Activated CD4-positive, alpha-beta memory T cell treated with anti-CD3 and anti-CD28 coated beads for 36 hours (primary cell): ENCODE measurements at regions of chr14 and their contacts with region 1.

Region 1: DNA sequence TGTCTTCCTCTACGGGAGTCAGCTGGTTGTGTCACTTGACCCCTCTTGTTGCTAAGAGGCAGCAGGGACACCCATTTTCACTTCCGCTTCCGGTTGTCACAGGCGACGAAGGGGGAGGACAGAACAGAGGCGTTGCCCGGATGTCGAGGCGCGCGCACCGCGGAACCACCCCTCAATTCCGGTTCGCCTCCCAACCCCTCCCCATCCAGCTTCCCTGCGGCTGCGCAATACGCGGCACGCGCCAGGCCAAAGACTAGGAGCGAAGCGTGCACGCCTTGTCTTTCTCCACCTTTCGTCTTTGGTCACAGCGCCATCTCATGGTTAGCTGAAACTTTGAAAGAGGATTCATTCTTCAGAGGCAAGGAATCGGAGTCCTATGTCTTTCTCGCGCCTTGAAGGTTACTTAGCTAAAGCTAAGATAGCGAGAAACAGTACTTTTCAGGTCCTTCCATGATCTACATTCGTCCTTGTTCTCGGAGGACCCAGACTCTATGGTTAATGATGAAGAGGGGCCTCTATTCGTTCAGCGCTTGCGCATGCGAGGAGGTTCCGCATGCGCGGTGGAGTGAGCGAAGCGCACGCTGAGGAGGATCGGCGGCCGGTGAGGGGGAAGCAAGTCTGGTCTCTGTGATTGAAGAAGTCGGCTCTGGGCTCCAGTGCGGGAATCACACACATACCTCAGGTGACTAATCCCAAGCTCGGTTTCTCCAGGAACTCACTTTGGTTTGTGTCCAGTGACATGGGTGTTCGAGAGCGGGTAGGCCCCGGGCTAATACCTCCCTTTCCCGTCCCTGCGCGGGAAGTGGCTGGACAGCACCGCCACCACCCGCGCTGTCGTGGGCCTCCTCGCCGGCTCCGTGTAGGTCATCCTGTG is at the starts of genes ATP6V1D and EIF2S1:
- DNase-seq: peak; percentile 100
- H3K4me3 Mint-ChIP-seq: peak within 1 kb of the TSS; percentile 99
- H3K27ac Mint-ChIP-seq: peak within 1 kb of the TSS; percentile 98
- H3K4me1 Mint-ChIP-seq: peaks cover 62% of the 10 kb centered on the region
- H3K27me3 Mint-ChIP-seq: peaks cover 2% of the 10 kb centered on the region
- total RNA-seq, gene ATP6V1D: 28.3 to 31.7 TPM
- total RNA-seq, gene EIF2S1: 238 to 240 TPM

Region 2: GRCh38 chr14:67187210-67187609 is 172.8 kb before region 1 on chr14:
- CTCF ChIA-PET with region 1: interaction called, 4 read pairs
- POLR2A ChIA-PET with region 1: no interaction called
- intact Hi-C with region 1: loop called (anchors 5 kb)
- DNase-seq: no peak
- H3K4me3 Mint-ChIP-seq: no peak overlapping the region
- H3K27ac Mint-ChIP-seq: no peak overlapping the region
- H3K4me1 Mint-ChIP-seq: peaks cover 19% of the 10 kb centered on the region
- H3K27me3 Mint-ChIP-seq: no peaks in the 10 kb centered on the region

Region 3: DNA sequence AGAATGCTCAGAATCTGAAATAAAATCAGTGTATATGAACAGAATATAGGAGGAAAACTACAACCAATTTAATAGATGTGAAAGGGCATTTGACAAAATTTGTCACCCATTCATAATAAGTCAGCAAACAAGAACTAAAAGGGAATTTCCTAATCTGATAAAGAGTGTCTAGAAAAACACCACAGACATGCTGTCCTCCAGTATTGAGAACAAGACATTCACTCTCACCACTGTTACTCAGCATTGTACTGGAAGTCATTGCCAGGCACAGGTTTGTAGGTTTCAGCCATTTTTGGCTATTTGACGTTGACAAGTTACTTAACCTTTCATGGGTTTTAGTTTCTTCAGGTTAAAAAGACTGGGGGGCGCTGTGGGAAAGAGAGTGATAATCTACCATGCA is 13.3 kb after region 1 on chr14:
- CTCF ChIA-PET with region 1: interaction called, 16 read pairs
- POLR2A ChIA-PET with region 1: interaction called, 6 read pairs
- intact Hi-C with region 1: loop called (anchors 1 kb)
- DNase-seq: peak; percentile 49
- H3K4me3 Mint-ChIP-seq: no peak overlapping the region
- H3K27ac Mint-ChIP-seq: peak overlapping the region; percentile 86
- H3K4me1 Mint-ChIP-seq: peaks cover 52% of the 10 kb centered on the region
- H3K27me3 Mint-ChIP-seq: no peaks in the 10 kb centered on the region

Region 4: DNA sequence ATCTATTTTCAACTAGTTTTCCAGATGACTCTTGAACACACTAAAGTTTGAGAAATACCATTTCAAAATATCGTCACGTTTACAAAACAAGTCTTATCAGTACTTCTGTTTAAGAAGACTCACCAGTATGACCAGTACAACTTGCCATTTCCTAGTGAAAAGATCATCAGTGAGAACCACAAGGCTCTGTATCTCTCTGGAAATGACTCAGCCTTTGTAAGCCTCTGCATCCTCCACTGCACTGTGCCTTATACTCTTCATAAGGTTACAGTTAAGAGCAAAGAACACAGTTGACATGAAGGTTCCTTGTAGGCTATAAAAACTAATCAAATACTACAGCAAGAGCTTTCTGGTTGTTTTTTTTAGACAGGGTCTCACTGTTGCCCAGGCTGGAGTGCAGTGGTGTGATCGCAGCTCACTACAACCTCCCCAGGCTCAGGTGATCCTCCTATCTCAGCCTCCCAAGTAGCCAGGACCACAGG is 320.1 kb after region 1 on chr14:
- CTCF ChIA-PET with region 1: no interaction called
- POLR2A ChIA-PET with region 1: interaction called, 4 read pairs
- intact Hi-C with region 1: loop called (anchors 5 kb)
- DNase-seq: peak; percentile 47
- H3K4me3 Mint-ChIP-seq: no peak overlapping the region
- H3K27ac Mint-ChIP-seq: peak overlapping the region; percentile 64
- H3K4me1 Mint-ChIP-seq: peaks cover 42% of the 10 kb centered on the region
- H3K27me3 Mint-ChIP-seq: no peaks in the 10 kb centered on the region

Region 5: GRCh38 chr14:68795597-68796417 is 1435.8 kb after region 1 on chr14:
- CTCF ChIA-PET with region 1: no interaction called
- POLR2A ChIA-PET with region 1: no interaction called
- intact Hi-C with region 1: loop called (anchors 10 kb)
- DNase-seq: peak; percentile 87
- H3K4me3 Mint-ChIP-seq: peak overlapping the region; percentile 89
- H3K27ac Mint-ChIP-seq: peak overlapping the region; percentile 99
- H3K4me1 Mint-ChIP-seq: peaks cover 48% of the 10 kb centered on the region
- H3K27me3 Mint-ChIP-seq: no peaks in the 10 kb centered on the region